ENCODE measurements at regions of chr1 and their contacts with region 1.

Region 1: DNA sequence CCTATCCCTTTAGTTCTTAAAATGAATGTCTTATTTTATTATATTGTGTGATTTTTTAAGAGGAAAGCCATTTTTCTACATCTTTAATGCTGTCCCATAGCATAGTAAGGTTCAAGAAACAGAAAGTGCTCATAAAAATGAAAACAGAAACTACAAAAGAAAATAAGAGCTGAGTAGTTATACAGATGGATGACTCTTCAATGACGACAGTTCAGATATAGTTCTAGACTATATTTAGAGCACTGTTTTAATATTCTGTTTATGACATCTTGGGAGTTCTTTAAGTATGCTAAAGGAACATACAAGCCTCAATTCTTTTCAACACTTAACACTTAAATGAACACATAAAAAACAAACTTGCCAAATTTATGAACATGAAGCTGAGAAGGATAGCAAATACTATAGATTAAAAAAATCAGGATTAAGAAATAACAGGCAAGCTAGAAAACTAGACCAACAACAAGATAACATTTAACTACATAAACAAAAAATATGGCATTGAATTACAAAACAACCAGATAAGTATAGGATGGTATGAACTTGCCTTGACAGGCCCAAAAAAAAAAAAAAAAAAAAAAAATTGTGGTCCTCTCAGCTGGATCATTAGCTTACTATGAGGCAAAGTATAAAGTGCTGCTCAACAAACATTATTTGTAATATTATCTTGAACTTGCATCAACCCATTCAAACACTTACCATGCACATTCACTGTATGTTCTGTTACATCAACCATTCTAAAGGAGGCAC is 87.9 kb downstream of the ZZZ3 start:
- DNase-seq: no peak
- H3K4me3 ChIP-seq: no peak overlapping the region
- H3K27ac ChIP-seq: no peak overlapping the region
- H3K4me1 ChIP-seq: peaks cover 11 to 19% of the 10 kb centered on the region in 2 donors
- H3K27me3 ChIP-seq: no peaks in the 10 kb centered on the region
- CTCF ChIP-seq: no peak
- POLR2A ChIP-seq: no peak

Region 2: GRCh38 chr1:77683160-77684148 is 88.9 kb after region 1 on chr1:
- intact Hi-C with region 1: loop called in 1 of 2 experiments (anchors 10 kb)
- DNase-seq: peak; percentile 91 to 96 (median 95)
- H3K4me3 ChIP-seq: peak overlapping the region in 3 of 4 donors; percentile 78 to 93 (median 80)
- H3K27ac ChIP-seq: peak overlapping the region; percentile 82 to 98 (median 95)
- H3K4me1 ChIP-seq: peaks cover 30 to 43% of the 10 kb centered on the region in 2 donors
- H3K27me3 ChIP-seq: no peaks in the 10 kb centered on the region
- CTCF ChIP-seq: peak; percentile 60 to 98 (median 81)
- POLR2A ChIP-seq: peak; percentile 55 to 69

Measured in adrenal gland (tissue), 19 donors.